Naive thymus-derived CD4-positive, alpha-beta T cell (primary cell): ENCODE measurements at regions of chr9 and their contacts with region 1.

Region 1: GRCh38 chr9:113410207-113410864 is at the starts of genes C9orf43 and POLE3:
- DNase-seq: peak; percentile 90 to 98 (median 96)
- ATAC-seq: peak; percentile 95
- H3K4me3 ChIP-seq: peak within 1 kb of the TSS; percentile 92
- H3K4me3 Mint-ChIP-seq: peak within 1 kb of the TSS; percentile 94 to 100 (median 98)
- H3K27ac ChIP-seq: peak within 1 kb of the TSS; percentile 89
- H3K27ac Mint-ChIP-seq: peak within 1 kb of the TSS; percentile 98 to 100 (median 99)
- H3K4me1 ChIP-seq: peaks cover 3 to 9% of the 10 kb centered on the region in 2 donors
- H3K4me1 Mint-ChIP-seq: peaks cover 20 to 42% (median 31%) of the 10 kb centered on the region in 7 donors
- H3K27me3 ChIP-seq: no peaks in the 10 kb centered on the region
- H3K27me3 Mint-ChIP-seq: peaks cover 0 to 2% (median 0%) of the 10 kb centered on the region in 5 donors
- total RNA-seq, gene C9orf43: 0.41 to 0.97 (median 0.61) TPM
- total RNA-seq, gene POLE3: 38.6 to 65.3 (median 50.9) TPM

Region 2: DNA sequence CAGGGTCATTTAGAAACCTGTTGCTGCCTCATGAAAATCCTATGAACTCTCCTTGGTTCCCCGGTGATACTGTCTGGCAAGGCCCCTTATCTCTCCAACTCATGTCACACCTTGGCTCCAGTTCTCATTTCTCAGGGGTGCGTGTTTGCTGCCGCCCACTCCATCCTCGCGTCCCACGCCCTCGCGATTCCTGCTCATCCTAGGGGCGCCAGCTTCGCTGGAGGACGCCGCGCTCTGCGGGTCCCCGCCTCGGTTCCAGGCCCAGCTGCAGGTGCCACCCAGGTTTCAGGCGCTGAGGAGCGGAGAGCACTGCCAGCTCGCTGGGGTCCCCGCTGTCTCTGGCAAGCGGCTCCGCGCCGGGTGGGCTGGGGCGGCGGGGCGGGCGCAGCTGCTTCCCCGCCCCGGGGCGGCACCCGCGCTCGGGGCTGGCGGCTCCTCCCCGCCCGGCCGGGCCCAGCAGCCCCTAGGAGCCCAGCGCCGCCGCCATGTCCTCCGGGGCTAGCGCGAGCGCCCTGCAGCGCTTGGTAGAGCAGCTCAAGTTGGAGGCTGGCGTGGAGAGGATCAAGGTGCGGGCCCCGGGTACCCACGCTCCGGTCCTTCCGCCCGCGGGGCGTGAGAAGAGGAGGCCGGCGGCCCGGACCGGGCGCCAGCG is 1749.1 kb before region 1 on chr9 and contains the start of gene GNG10:
- CTCF ChIA-PET with region 1: no interaction called
- POLR2A ChIA-PET with region 1: no interaction called
- intact Hi-C with region 1: loop called in 1 of 2 experiments (anchors 5 kb)
- DNase-seq: peak; percentile 57 to 79 (median 68)
- ATAC-seq: peak; percentile 95
- H3K4me3 ChIP-seq: peak within 1 kb of the TSS; percentile 70
- H3K4me3 Mint-ChIP-seq: peak within 1 kb of the TSS; percentile 87 to 97 (median 93)
- H3K27ac ChIP-seq: peak within 1 kb of the TSS; percentile 71
- H3K27ac Mint-ChIP-seq: peak within 1 kb of the TSS; percentile 82 to 97 (median 92)
- H3K4me1 ChIP-seq: peaks cover 18 to 31% of the 10 kb centered on the region in 2 donors
- H3K4me1 Mint-ChIP-seq: peaks cover 16 to 44% (median 32%) of the 10 kb centered on the region in 7 donors
- H3K27me3 ChIP-seq: no peaks in the 10 kb centered on the region
- H3K27me3 Mint-ChIP-seq: no peaks in the 10 kb centered on the region
- total RNA-seq, gene GNG10: 5.3 to 26.1 (median 12.2) TPM

Region 3: GRCh38 chr9:113221003-113221799 is 189.1 kb before region 1 on chr9 and contains the starts of genes FKBP15 and SLC31A1:
- CTCF ChIA-PET with region 1: no interaction called
- POLR2A ChIA-PET with region 1: interaction called, 4 read pairs
- intact Hi-C with region 1: loop called (anchors 1 kb)
- DNase-seq: peak; percentile 88 to 96 (median 96)
- ATAC-seq: peak; percentile 99
- H3K4me3 ChIP-seq: peak within 1 kb of the TSS; percentile 91
- H3K4me3 Mint-ChIP-seq: peak within 1 kb of the TSS; percentile 89 to 99 (median 94)
- H3K27ac ChIP-seq: peak within 1 kb of the TSS; percentile 94
- H3K27ac Mint-ChIP-seq: peak within 1 kb of the TSS; percentile 86 to 98 (median 94)
- H3K4me1 ChIP-seq: peaks cover 10 to 25% of the 10 kb centered on the region in 2 donors
- H3K4me1 Mint-ChIP-seq: peaks cover 15 to 58% (median 48%) of the 10 kb centered on the region in 7 donors
- H3K27me3 ChIP-seq: no peaks in the 10 kb centered on the region
- H3K27me3 Mint-ChIP-seq: no peaks in the 10 kb centered on the region
- total RNA-seq, gene FKBP15: 22.4 to 50.6 (median 33.4) TPM
- total RNA-seq, gene SLC31A1: 4.5 to 10.4 (median 4.7) TPM

Region 4: GRCh38 chr9:113340017-113340699 is 70.2 kb before region 1 on chr9 and contains the start of gene WDR31:
- CTCF ChIA-PET with region 1: no interaction called
- POLR2A ChIA-PET with region 1: interaction called, 8 read pairs
- intact Hi-C with region 1: loop called (anchors 1 to 2 kb)
- DNase-seq: peak; percentile 52 to 85 (median 75)
- ATAC-seq: peak; percentile 98
- H3K4me3 ChIP-seq: peak within 1 kb of the TSS; percentile 86
- H3K4me3 Mint-ChIP-seq: peak within 1 kb of the TSS; percentile 72 to 91 (median 88)
- H3K27ac ChIP-seq: peak within 1 kb of the TSS; percentile 62
- H3K27ac Mint-ChIP-seq: peak within 1 kb of the TSS; percentile 2 to 85 (median 62)
- H3K4me1 ChIP-seq: peaks cover 4 to 20% of the 10 kb centered on the region in 2 donors
- H3K4me1 Mint-ChIP-seq: peaks cover 12 to 54% (median 30%) of the 10 kb centered on the region in 7 donors
- H3K27me3 ChIP-seq: no peaks in the 10 kb centered on the region
- H3K27me3 Mint-ChIP-seq: peaks cover 0 to 7% (median 0%) of the 10 kb centered on the region in 5 donors
- total RNA-seq, gene WDR31: 0.27 to 1.7 (median 1.0) TPM

Region 5: GRCh38 chr9:113446323-113446740 is 36.0 kb after region 1 on chr9:
- CTCF ChIA-PET with region 1: interaction called, 4 read pairs
- POLR2A ChIA-PET with region 1: no interaction called
- intact Hi-C with region 1: loop called in 1 of 2 experiments (anchors 2 kb)
- DNase-seq: peak in 6 of 9 donors; percentile 20 to 51 (median 42)
- ATAC-seq: no peak
- H3K4me3 ChIP-seq: no peak overlapping the region
- H3K4me3 Mint-ChIP-seq: no peak overlapping the region
- H3K27ac ChIP-seq: no peak overlapping the region
- H3K27ac Mint-ChIP-seq: no peak overlapping the region
- H3K4me1 ChIP-seq: no peaks in the 10 kb centered on the region
- H3K4me1 Mint-ChIP-seq: peaks cover 0 to 3% (median 0%) of the 10 kb centered on the region in 7 donors
- H3K27me3 ChIP-seq: no peaks in the 10 kb centered on the region
- H3K27me3 Mint-ChIP-seq: no peaks in the 10 kb centered on the region

Region 6: GRCh38 chr9:113578882-113579282 is 168.5 kb after region 1 on chr9:
- CTCF ChIA-PET with region 1: interaction called, 8 read pairs
- POLR2A ChIA-PET with region 1: interaction called, 14 read pairs
- intact Hi-C with region 1: loop called (anchors 1 kb)
- DNase-seq: peak; percentile 39 to 86 (median 66)
- ATAC-seq: peak; percentile 75
- H3K4me3 ChIP-seq: peak overlapping the region; percentile 37
- H3K4me3 Mint-ChIP-seq: peak overlapping the region; percentile 70 to 95 (median 82)
- H3K27ac ChIP-seq: peak overlapping the region; percentile 77
- H3K27ac Mint-ChIP-seq: peak overlapping the region; percentile 92 to 98 (median 96)
- H3K4me1 ChIP-seq: peaks cover 49 to 50% of the 10 kb centered on the region in 2 donors
- H3K4me1 Mint-ChIP-seq: peaks cover 53 to 85% (median 75%) of the 10 kb centered on the region in 7 donors
- H3K27me3 ChIP-seq: no peaks in the 10 kb centered on the region
- H3K27me3 Mint-ChIP-seq: no peaks in the 10 kb centered on the region

Region 7: GRCh38 chr9:114385412-114386181 is 975.3 kb after region 1 on chr9:
- CTCF ChIA-PET with region 1: no interaction called
- POLR2A ChIA-PET with region 1: no interaction called
- intact Hi-C with region 1: loop called in 1 of 2 experiments (anchors 10 kb)
- DNase-seq: peak; percentile 68 to 96 (median 93)
- ATAC-seq: peak; percentile 88
- H3K4me3 ChIP-seq: peak overlapping the region; percentile 63
- H3K4me3 Mint-ChIP-seq: peak overlapping the region; percentile 89 to 100 (median 96)
- H3K27ac ChIP-seq: peak overlapping the region; percentile 87
- H3K27ac Mint-ChIP-seq: peak overlapping the region; percentile 88 to 100 (median 96)
- H3K4me1 ChIP-seq: peaks cover 72 to 75% of the 10 kb centered on the region in 2 donors
- H3K4me1 Mint-ChIP-seq: peaks cover 61 to 77% (median 70%) of the 10 kb centered on the region in 7 donors
- H3K27me3 ChIP-seq: no peaks in the 10 kb centered on the region
- H3K27me3 Mint-ChIP-seq: no peaks in the 10 kb centered on the region

Region 8: GRCh38 chr9:115042781-115043509 is 1632.6 kb after region 1 on chr9:
- CTCF ChIA-PET with region 1: no interaction called
- POLR2A ChIA-PET with region 1: no interaction called
- intact Hi-C with region 1: no loop called
- DNase-seq: peak in 1 of 9 donors; percentile 71
- ATAC-seq: no peak
- H3K4me3 ChIP-seq: no peak overlapping the region
- H3K4me3 Mint-ChIP-seq: no peak overlapping the region
- H3K27ac ChIP-seq: no peak overlapping the region
- H3K27ac Mint-ChIP-seq: peak overlapping the region in 1 of 9 donors; percentile 2
- H3K4me1 ChIP-seq: no peaks in the 10 kb centered on the region
- H3K4me1 Mint-ChIP-seq: peaks cover 0 to 8% (median 5%) of the 10 kb centered on the region in 7 donors
- H3K27me3 ChIP-seq: no peaks in the 10 kb centered on the region
- H3K27me3 Mint-ChIP-seq: peaks cover 0 to 34% (median 4%) of the 10 kb centered on the region in 5 donors